T-cell (primary cell): ENCODE measurements at regions of chrX and their contacts with region 1.

Region 1: DNA sequence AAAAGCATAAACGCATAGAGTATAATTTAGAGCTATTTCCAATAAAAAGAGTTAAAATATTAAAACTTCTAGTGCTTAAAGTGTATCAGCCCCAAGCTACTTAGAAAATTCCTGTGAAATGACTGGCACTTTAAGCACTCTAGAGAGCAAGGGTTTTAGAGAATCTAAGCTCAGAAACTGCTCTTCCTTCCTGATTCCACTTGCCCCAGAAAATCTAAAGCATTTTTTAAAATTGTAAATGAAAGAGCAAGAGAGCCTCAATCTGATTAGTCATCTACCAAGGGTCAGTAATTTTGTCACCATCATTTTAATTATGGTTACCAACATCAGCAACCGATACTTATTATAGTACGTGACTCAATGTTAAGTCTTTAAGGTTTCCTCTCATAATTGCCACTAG is 25.0 kb downstream of the CTPS2 start:
- DNase-seq: no peak
- ATAC-seq: no peak
- H3K4me3 ChIP-seq: no peak overlapping the region
- H3K4me3 Mint-ChIP-seq: no peak overlapping the region
- H3K27ac ChIP-seq: no peak overlapping the region
- H3K27ac Mint-ChIP-seq: no peak overlapping the region
- H3K4me1 ChIP-seq: no peaks in the 10 kb centered on the region
- H3K4me1 Mint-ChIP-seq: no peaks in the 10 kb centered on the region
- H3K27me3 ChIP-seq: no peaks in the 10 kb centered on the region
- H3K27me3 Mint-ChIP-seq: no peaks in the 10 kb centered on the region

Region 2: GRCh38 chrX:15497865-15498264 is 1189.6 kb before region 1 on chrX:
- CTCF ChIA-PET with region 1: interaction called in 1 of 2 experiments, 14 read pairs
- POLR2A ChIA-PET with region 1: no interaction called
- DNase-seq: peak in 32 of 35 experiments; percentile 4 to 62 (median 25)
- ATAC-seq: peak in 2 of 4 experiments; percentile 43 to 51
- H3K4me3 ChIP-seq: no peak overlapping the region
- H3K4me3 Mint-ChIP-seq: no peak overlapping the region
- H3K27ac ChIP-seq: no peak overlapping the region
- H3K27ac Mint-ChIP-seq: no peak overlapping the region
- H3K4me1 ChIP-seq: peaks cover 0 to 9% of the 10 kb centered on the region in 2 experiments
- H3K4me1 Mint-ChIP-seq: peaks cover 6 to 17% (median 7%) of the 10 kb centered on the region in 3 donors
- H3K27me3 ChIP-seq: peaks cover 0 to 4% of the 10 kb centered on the region in 2 experiments
- H3K27me3 Mint-ChIP-seq: peaks cover 7 to 66% of the 10 kb centered on the region in 2 donors

Region 3: DNA sequence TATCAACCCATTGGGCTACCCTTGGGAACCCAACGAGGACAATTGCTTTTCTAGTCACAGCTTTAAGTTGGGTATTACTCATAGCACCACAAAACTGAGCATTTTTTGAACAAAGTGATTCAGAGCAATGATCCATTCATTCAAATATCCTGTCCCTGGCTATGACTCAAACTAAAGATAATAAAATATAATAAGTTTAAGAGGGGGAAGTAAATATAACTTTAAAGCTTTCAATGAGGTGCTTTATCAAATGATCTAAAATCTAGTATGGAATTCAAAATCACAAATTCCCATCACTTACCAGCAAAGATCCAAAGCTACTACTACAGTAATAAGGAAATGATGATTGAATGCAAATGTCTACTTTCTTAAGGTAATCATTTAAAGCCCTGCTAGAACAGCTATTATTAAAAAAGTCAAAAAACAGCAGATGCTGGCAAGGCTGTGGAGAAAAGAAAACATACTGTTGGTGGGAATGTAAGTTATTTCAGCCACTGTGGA is 77.3 kb before region 1 on chrX:
- CTCF ChIA-PET with region 1: no interaction called
- POLR2A ChIA-PET with region 1: no interaction called
- DNase-seq: no peak
- ATAC-seq: no peak
- H3K4me3 ChIP-seq: no peak overlapping the region
- H3K4me3 Mint-ChIP-seq: no peak overlapping the region
- H3K27ac ChIP-seq: no peak overlapping the region
- H3K27ac Mint-ChIP-seq: no peak overlapping the region
- H3K4me1 ChIP-seq: peaks cover 4 to 11% of the 10 kb centered on the region in 2 experiments
- H3K4me1 Mint-ChIP-seq: peaks cover 6 to 19% (median 19%) of the 10 kb centered on the region in 3 donors
- H3K27me3 ChIP-seq: no peaks in the 10 kb centered on the region
- H3K27me3 Mint-ChIP-seq: peaks cover 0 to 4% of the 10 kb centered on the region in 2 donors

Region 4: GRCh38 chrX:16719334-16720084 is 32.0 kb after region 1 on chrX and contains the start of gene SYAP1:
- CTCF ChIA-PET with region 1: no interaction called
- POLR2A ChIA-PET with region 1: no interaction called
- DNase-seq: peak; percentile 81 to 99 (median 92)
- ATAC-seq: peak; percentile 92 to 96 (median 94)
- H3K4me3 ChIP-seq: peak within 1 kb of the TSS; percentile 82 to 92
- H3K4me3 Mint-ChIP-seq: peak within 1 kb of the TSS; percentile 88 to 98 (median 89)
- H3K27ac ChIP-seq: peak within 1 kb of the TSS; percentile 91
- H3K27ac Mint-ChIP-seq: peak within 1 kb of the TSS; percentile 94 to 97
- H3K4me1 ChIP-seq: peaks cover 4 to 20% of the 10 kb centered on the region in 2 experiments
- H3K4me1 Mint-ChIP-seq: peaks cover 40 to 54% (median 50%) of the 10 kb centered on the region in 3 donors
- H3K27me3 ChIP-seq: no peaks in the 10 kb centered on the region
- H3K27me3 Mint-ChIP-seq: no peaks in the 10 kb centered on the region
- total RNA-seq, gene SYAP1: 12.5 to 53.2 (median 19.3) TPM

Region 5: DNA sequence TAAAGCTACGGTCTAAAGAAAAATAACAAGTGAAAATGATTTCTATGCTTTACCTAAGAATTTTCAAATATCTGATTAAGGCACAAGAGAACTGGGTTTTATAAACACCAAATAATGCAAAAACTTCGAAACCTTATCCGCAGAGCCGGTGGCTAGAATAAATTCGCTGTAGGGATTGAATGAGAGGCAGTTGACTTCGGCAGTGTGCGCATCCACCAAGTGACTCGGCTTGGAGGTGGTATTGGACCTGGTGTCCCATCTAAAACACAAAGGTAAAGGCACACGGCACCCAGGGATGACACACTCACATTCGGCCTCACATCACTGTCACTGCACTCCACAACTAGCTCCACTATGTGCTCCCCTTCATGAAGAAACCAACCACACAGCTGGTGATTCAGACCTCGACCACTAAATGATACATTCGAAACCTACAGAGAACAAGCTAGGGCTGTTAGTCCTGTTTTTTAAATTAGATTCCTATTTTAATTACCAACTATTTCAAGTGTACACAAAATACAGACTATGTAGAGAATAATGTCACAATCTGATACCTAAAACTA is 165.2 kb after region 1 on chrX:
- CTCF ChIA-PET with region 1: no interaction called
- POLR2A ChIA-PET with region 1: no interaction called
- DNase-seq: no peak
- ATAC-seq: no peak
- H3K4me3 ChIP-seq: no peak overlapping the region
- H3K4me3 Mint-ChIP-seq: no peak overlapping the region
- H3K27ac ChIP-seq: no peak overlapping the region
- H3K27ac Mint-ChIP-seq: no peak overlapping the region
- H3K4me1 ChIP-seq: no peaks in the 10 kb centered on the region
- H3K4me1 Mint-ChIP-seq: peaks cover 0 to 15% (median 10%) of the 10 kb centered on the region in 3 donors
- H3K27me3 ChIP-seq: no peaks in the 10 kb centered on the region
- H3K27me3 Mint-ChIP-seq: no peaks in the 10 kb centered on the region

Region 6: DNA sequence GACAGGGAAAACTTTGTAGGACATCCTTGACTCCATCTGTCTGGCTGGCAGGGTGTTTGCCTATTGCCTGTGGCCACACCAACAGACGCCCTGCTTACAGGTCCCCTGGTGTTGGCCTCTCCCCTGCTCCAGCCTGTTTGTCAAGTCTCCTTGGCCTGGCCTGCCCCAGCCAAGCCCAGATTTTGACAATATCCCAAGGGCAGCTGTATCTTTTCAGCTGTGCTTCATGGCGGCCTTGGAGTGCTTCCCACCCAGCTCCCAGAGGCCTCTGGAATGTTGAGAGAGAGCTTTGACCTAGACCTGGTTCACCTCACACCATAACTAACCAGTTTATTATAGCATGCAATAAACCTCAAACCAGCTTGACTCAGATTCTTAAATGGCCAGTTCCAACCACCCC is 483.5 kb after region 1 on chrX:
- CTCF ChIA-PET with region 1: no interaction called
- POLR2A ChIA-PET with region 1: interaction called in 1 of 2 experiments, 12 read pairs
- DNase-seq: no peak
- ATAC-seq: no peak
- H3K4me3 ChIP-seq: no peak overlapping the region
- H3K4me3 Mint-ChIP-seq: no peak overlapping the region
- H3K27ac ChIP-seq: no peak overlapping the region
- H3K27ac Mint-ChIP-seq: no peak overlapping the region
- H3K4me1 ChIP-seq: no peaks in the 10 kb centered on the region
- H3K4me1 Mint-ChIP-seq: no peaks in the 10 kb centered on the region
- H3K27me3 ChIP-seq: no peaks in the 10 kb centered on the region
- H3K27me3 Mint-ChIP-seq: peaks cover 0 to 7% of the 10 kb centered on the region in 2 donors